ENCODE measurements at regions of chrX and their contacts with region 1.

Region 1: GRCh38 chrX:20530406-20530921 is 263.8 kb upstream of the RPS6KA3 start:
- DNase-seq: peak; percentile 5
- ATAC-seq: peak; percentile 77
- H3K4me3 ChIP-seq: no peak overlapping the region
- H3K27ac ChIP-seq: no peak overlapping the region
- H3K4me1 ChIP-seq: no peaks in the 10 kb centered on the region
- H3K27me3 ChIP-seq: no peaks in the 10 kb centered on the region; a peak in 2 of 4 replicates
- CTCF ChIP-seq: peak; percentile 71 to 75 (median 72)
- EP300 ChIP-seq: no peak
- POLR2A ChIP-seq: no peak
- RAD21 ChIP-seq: peak; percentile 82

Region 2: GRCh38 chrX:20252381-20253231 is 277.9 kb before region 1 on chrX:
- CTCF ChIA-PET with region 1: interaction called, 5 read pairs
- POLR2A ChIA-PET with region 1: no interaction called
- RAD21 ChIA-PET with region 1: no interaction called
- SMC1A ChIA-PET with region 1: interaction called, 4 read pairs
- in situ Hi-C with region 1: no loop called
- intact Hi-C with region 1: loop called (anchors 5 kb)
- DNase-seq: no peak
- ATAC-seq: peak; percentile 94
- H3K4me3 ChIP-seq: no peak overlapping the region
- H3K27ac ChIP-seq: no peak overlapping the region
- H3K4me1 ChIP-seq: no peaks in the 10 kb centered on the region; the same call in 1 of the 2 replicates
- H3K27me3 ChIP-seq: no peaks in the 10 kb centered on the region
- CTCF ChIP-seq: peak; percentile 70 to 82 (median 77)
- EP300 ChIP-seq: no peak
- POLR2A ChIP-seq: no peak
- RAD21 ChIP-seq: peak; percentile 76

Region 3: DNA sequence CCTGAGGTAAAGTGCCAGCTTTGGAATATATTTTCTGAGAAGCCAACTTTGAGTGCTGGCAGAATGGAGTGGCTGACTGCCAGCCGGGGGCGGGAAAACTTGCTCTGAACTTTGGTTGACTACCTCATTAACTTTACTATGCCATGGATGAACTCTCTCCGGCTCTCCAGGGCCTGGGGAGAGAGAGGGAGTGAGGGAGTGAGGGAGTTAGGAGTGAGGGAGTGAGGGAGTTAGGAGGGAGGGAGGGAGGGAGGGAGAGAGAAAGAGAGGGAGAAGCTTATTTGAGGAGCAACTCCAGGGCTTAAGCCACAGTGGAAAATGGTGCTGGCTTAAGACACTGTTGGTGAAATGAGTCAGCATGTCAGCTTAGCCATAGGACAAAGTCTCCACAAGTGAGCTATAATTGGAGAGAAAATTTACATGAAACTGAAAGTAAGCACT is 17.2 kb after region 1 on chrX:
- CTCF ChIA-PET with region 1: interaction called, 35 read pairs
- POLR2A ChIA-PET with region 1: no interaction called
- RAD21 ChIA-PET with region 1: interaction called, 5 read pairs
- SMC1A ChIA-PET with region 1: interaction called, 5 read pairs
- in situ Hi-C with region 1: no loop called
- intact Hi-C with region 1: no loop called
- DNase-seq: no peak
- ATAC-seq: peak; percentile 50; the same call in 2 of the 3 replicates
- H3K4me3 ChIP-seq: no peak overlapping the region
- H3K27ac ChIP-seq: no peak overlapping the region
- H3K4me1 ChIP-seq: no peaks in the 10 kb centered on the region
- H3K27me3 ChIP-seq: no peaks in the 10 kb centered on the region
- CTCF ChIP-seq: no peak
- EP300 ChIP-seq: no peak
- POLR2A ChIP-seq: no peak
- RAD21 ChIP-seq: no peak

Region 4: GRCh38 chrX:21354725-21355124 is 824.3 kb after region 1 on chrX:
- CTCF ChIA-PET with region 1: interaction called, 41 read pairs
- POLR2A ChIA-PET with region 1: no interaction called
- RAD21 ChIA-PET with region 1: interaction called, 38 read pairs
- SMC1A ChIA-PET with region 1: interaction called, 24 read pairs
- in situ Hi-C with region 1: no loop called
- intact Hi-C with region 1: loop called (anchors 10 kb)
- DNase-seq: no peak
- ATAC-seq: peak; percentile 52; the same call in 2 of the 3 replicates
- H3K4me3 ChIP-seq: no peak overlapping the region
- H3K27ac ChIP-seq: no peak overlapping the region
- H3K4me1 ChIP-seq: no peaks in the 10 kb centered on the region
- H3K27me3 ChIP-seq: no peaks in the 10 kb centered on the region
- CTCF ChIP-seq: peak in 1 of 3 experiments; percentile 18; a peak in 1 of 6 replicates
- EP300 ChIP-seq: no peak
- POLR2A ChIP-seq: no peak
- RAD21 ChIP-seq: no peak

Region 5: GRCh38 chrX:21725496-21725895 is 1195.0 kb after region 1 on chrX:
- CTCF ChIA-PET with region 1: interaction called, 18 read pairs
- POLR2A ChIA-PET with region 1: no interaction called
- RAD21 ChIA-PET with region 1: interaction called, 4 read pairs
- SMC1A ChIA-PET with region 1: interaction called, 5 read pairs
- in situ Hi-C with region 1: no loop called
- intact Hi-C with region 1: no loop called
- DNase-seq: no peak
- ATAC-seq: no peak
- H3K4me3 ChIP-seq: no peak overlapping the region
- H3K27ac ChIP-seq: no peak overlapping the region
- H3K4me1 ChIP-seq: no peaks in the 10 kb centered on the region
- H3K27me3 ChIP-seq: no peaks in the 10 kb centered on the region
- CTCF ChIP-seq: peak in 2 of 3 experiments; percentile 14 to 30; a peak in 2 of 6 replicates
- EP300 ChIP-seq: no peak
- POLR2A ChIP-seq: no peak
- RAD21 ChIP-seq: peak; percentile 38

Region 6: GRCh38 chrX:22192417-22193060 is 1662.1 kb after region 1 on chrX:
- CTCF ChIA-PET with region 1: no interaction called
- POLR2A ChIA-PET with region 1: no interaction called
- RAD21 ChIA-PET with region 1: no interaction called
- SMC1A ChIA-PET with region 1: no interaction called
- in situ Hi-C with region 1: no loop called
- intact Hi-C with region 1: loop called (anchors 10 kb)
- DNase-seq: peak; percentile 3
- ATAC-seq: peak; percentile 96
- H3K4me3 ChIP-seq: no peak overlapping the region
- H3K27ac ChIP-seq: no peak overlapping the region
- H3K4me1 ChIP-seq: no peaks in the 10 kb centered on the region
- H3K27me3 ChIP-seq: no peaks in the 10 kb centered on the region
- CTCF ChIP-seq: peak; percentile 73 to 82 (median 76)
- EP300 ChIP-seq: no peak
- POLR2A ChIP-seq: no peak
- RAD21 ChIP-seq: peak; percentile 58

Measured in GM12878 (cell line).